ENCODE measurements at regions of chr6 and their contacts with region 1.

Region 1: DNA sequence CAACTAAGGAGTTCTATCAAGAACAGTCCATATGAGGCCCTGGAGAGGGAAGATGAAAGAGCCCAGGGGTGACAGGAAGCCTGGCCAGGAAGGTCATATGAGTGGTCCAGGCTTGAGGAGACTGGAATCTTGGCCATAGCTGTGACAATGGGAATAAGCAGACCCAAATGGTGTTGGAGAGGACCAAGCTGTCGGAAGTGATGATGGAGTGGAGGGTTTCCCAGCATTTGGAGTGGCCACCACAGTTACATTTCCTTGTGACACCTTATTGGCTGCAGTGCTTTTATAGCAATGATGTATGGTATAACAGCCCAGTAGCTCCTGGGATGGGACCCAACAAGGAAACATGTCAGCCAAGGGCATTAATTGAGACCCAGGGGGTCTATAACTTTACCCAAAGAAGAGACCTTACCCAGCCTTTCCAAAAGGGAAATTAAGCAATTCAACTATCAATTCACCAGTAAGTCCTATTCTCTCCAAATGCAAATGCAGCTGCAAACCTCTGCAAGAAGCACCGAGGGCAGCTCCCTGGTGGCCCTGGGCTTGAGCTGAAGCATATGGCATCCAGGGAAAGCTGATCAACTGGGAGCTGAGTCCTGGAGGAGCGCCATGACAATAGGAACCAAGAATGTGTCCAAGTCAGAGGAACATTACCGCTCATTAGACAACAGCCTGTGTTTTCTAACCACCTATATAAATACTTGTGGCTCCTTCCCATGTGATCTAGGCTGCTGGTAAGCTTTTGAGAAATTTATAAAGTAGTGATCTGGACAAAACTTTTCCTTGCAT is 219.4 kb downstream of the SOD2 start:
- DNase-seq: no peak
- H3K4me3 ChIP-seq: no peak overlapping the region
- H3K27ac ChIP-seq: no peak overlapping the region
- H3K27me3 ChIP-seq: no peaks in the 10 kb centered on the region
- CTCF ChIP-seq: no peak

Region 2: DNA sequence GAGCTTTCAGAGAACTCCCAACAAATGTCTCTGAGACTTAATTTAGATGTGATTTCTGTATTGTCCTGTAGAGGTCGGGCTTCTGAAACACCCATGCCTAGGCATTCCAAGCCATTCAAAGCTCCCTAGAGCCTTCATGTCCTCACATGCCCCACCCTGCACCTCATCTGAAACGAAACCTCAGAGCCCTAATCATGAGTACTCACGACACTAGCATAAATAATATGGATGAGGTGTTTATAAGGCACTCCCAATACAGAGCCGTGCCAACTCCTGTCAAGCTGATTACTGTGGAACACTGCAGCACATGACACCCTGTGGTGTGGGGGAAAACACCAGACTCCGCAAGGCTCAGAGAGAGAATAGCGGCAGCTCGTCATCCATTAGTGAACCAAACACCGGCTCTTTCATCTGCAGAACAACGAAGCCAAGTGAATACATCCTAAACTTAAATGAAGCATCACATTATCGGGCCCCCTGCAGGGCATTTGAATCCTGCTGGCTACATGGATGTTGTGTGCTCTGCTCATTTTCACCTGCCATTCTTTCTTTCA is 220.6 kb before region 1 on chr6:
- intact Hi-C with region 1: loop called in 1 of 2 experiments (anchors 10 kb)
- DNase-seq: peak in 1 of 10 donors; percentile 16
- H3K4me3 ChIP-seq: peak overlapping the region in 41 of 59 donors; percentile 4 to 57 (median 37)
- H3K27ac ChIP-seq: no peak overlapping the region
- H3K27me3 ChIP-seq: peaks cover 0 to 4% (median 0%) of the 10 kb centered on the region in 45 donors
- CTCF ChIP-seq: peak; percentile 38 to 77 (median 64)

Region 3: DNA sequence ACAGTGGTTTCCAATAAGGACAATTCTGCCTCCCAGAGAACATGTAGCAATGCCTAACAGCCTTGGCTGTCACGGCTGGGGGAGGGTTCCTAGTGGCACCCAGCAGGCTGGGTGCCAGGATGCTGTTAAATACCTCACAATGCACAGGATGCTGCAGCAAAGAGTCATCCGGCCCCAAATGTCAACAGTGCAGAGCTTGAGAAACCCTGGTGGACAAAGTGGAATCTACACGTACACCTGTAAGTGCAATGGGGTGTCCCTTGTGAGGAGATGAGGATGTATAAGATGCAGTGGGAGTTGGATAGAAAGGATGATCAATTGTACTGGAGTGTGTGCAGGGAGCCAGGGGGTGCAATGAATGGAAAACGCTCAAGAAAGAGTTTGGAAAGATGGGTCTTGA is 162.1 kb before region 1 on chr6:
- intact Hi-C with region 1: no loop called
- DNase-seq: no peak
- H3K4me3 ChIP-seq: no peak overlapping the region
- H3K27ac ChIP-seq: no peak overlapping the region
- H3K27me3 ChIP-seq: peaks cover 0 to 7% (median 0%) of the 10 kb centered on the region in 45 donors
- CTCF ChIP-seq: no peak

Region 4: DNA sequence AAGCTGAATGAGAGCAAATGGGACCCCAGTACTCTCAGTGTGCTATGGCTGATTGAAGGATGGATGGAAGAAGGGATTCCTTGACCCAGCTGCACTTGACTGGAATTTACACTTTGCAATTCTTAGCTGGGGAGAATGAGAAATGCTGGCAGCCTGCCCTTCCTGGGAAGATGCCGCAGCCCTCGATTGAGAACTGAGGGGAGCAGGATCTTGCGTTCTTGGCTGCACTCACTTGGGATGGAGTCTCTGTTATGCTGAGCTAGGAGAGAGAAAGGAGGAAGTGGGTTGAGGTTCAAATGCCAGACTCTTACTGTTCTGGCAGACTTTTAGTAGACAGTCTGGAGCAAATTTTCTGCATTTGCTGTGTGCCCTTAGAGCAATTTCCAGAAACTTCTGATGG is 83.3 kb before region 1 on chr6:
- intact Hi-C with region 1: no loop called
- DNase-seq: no peak
- H3K4me3 ChIP-seq: no peak overlapping the region
- H3K27ac ChIP-seq: no peak overlapping the region
- H3K27me3 ChIP-seq: peaks cover 0 to 30% (median 0%) of the 10 kb centered on the region in 45 donors
- CTCF ChIP-seq: no peak

Region 5: DNA sequence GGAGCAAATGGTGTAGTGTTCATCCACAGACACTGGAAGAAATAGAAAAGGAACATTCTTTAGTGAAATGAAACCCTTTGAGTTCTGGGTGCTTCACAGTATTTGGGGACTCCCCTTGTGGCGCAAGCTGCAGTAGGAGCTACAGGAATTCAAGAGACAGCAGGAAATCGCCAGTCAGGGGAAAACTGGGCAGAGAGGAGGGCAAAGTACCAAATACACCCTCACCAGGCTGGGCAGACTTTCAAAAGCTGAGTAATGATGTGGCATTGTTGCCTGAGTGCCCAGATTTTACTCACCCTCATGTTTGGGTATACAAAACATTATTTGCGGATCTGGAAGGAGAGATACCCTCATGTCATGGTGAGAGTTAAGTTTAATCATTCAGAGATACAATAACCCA is 121.5 kb after region 1 on chr6:
- intact Hi-C with region 1: no loop called
- DNase-seq: peak in 4 of 10 donors; percentile 26 to 56 (median 31)
- H3K4me3 ChIP-seq: peak overlapping the region in 4 of 59 donors; percentile 0 to 23 (median 6)
- H3K27ac ChIP-seq: peak overlapping the region in 7 of 59 donors; percentile 0 to 66 (median 11)
- H3K27me3 ChIP-seq: no peaks in the 10 kb centered on the region
- CTCF ChIP-seq: no peak